Mammary epithelial cell (primary cell): ENCODE measurements at regions of chr15 and their contacts with region 1.

Region 1: DNA sequence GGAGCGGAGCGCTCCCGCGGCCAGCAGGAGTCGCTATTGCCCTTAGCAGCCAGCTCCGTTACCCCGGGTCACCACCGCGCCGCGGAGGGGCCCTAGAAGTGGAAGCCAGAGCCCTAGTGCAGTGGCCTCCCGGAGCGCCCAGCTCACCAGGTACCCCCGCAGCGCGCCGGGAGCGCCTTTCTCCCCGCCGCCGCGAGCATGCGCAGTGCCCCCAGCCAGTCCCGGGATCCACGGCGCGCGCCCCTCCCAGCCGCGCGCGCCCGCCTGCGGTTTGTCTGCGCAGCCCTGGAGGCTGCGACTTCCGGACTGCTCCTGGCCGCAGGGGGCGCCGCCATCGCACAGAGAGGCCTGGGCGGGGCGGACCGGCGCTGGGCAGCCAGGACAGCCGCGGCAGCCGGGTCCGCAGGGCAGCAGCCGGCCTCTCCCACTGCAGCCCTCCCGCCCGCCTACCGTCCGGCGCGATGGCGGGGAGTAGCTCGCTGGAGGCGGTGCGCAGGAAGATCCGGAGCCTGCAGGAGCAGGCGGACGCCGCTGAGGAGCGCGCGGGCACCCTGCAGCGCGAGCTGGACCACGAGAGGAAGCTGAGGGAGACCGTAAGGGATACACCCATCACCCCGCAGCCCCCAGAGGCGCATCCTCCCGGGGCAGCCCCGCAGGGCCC is 5.7 kb downstream of the TPM1 start:
- DNase-seq: peak; percentile 89
- H3K4me3 ChIP-seq: peak overlapping the region; percentile 58 to 65 (median 59)
- H3K27ac ChIP-seq: peak overlapping the region; percentile 69
- H3K4me1 ChIP-seq: peaks cover 58% of the 10 kb centered on the region
- H3K27me3 ChIP-seq: no peaks in the 10 kb centered on the region
- CTCF ChIP-seq: peak; percentile 66 to 97

Region 2: DNA sequence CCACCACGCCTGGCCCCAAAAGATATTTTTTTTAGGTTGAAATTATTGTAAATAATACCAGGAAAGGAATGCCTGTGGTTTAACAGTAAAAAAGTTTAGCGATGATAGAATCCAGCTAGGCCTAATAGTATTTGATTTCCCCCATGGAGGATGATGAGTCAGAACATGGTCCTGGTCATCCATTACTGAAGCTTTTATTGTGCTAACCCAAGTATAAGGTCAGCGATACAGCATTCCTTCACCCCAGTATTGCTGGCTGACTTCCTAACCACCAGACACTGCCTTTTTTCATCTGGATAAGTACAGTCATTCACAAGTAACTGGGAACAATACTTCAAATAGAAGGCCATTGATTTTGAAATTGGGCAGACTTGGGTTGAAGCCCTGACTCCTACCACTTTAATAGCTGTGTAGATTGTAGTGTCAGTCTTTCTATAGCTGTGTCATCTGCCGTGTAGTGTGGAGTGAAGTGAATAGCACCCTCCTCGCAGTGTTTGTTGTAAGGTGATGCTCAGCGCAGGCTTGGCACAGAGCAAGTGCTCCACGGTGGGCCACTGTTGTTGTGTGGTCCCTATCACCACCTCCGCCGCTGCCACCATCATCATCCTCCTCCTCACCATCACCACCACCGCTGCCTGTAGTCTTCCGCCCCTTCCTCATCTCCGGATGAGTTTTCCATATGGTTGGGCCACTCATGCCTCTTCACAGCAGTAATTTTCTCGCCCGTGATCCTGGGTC is 441.7 kb before region 1 on chr15:
- CTCF ChIA-PET with region 1: no interaction called
- dilution Hi-C with region 1: no loop called
- in situ Hi-C with region 1: no loop called
- intact Hi-C with region 1: loop called (anchors 10 kb)
- DNase-seq: peak; percentile 97
- H3K4me3 ChIP-seq: no peak overlapping the region
- H3K27ac ChIP-seq: peak overlapping the region; percentile 69
- H3K4me1 ChIP-seq: peaks cover 39% of the 10 kb centered on the region
- H3K27me3 ChIP-seq: no peaks in the 10 kb centered on the region
- CTCF ChIP-seq: no peak

Region 3: DNA sequence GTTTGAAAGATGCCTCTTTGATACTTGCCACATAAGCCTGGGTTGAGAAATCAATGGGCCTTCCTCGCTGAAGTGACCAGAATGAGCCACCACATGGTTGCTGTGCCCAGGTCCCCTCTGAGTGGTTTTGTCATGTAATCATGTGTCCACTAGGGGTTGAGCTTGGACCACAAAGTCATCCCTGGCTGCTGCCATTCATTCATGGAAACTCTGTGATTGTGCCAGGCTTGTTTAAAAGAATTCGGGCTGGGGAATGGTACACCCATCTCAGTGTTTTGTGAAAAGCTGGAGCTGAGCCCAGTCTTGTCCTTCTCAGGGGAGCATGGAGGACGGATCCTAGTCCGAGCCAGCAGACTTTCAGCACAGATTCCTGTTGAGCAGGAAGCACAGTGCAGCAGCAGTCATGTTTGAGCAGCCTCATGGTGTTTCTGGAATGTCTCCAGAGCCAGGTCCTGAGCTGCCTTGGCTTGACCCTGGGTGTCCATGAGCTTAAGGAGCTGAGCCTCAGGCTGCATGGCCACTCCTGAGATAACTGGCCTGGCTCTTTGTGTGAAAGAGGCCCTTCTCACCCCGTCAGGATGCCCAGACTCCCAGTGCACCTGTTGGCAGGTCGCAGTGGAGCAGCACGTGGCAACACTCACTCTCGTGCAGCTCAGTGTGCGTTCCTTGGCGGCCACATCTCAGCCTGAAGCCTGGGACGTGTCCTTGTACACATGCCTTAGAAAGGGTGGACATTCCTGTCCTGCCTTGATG is 266.0 kb before region 1 on chr15:
- CTCF ChIA-PET with region 1: no interaction called
- dilution Hi-C with region 1: no loop called
- in situ Hi-C with region 1: no loop called
- intact Hi-C with region 1: loop called (anchors 1 kb)
- DNase-seq: peak; percentile 64
- H3K4me3 ChIP-seq: no peak overlapping the region
- H3K27ac ChIP-seq: no peak overlapping the region
- H3K4me1 ChIP-seq: peaks cover 10% of the 10 kb centered on the region
- H3K27me3 ChIP-seq: no peaks in the 10 kb centered on the region
- CTCF ChIP-seq: peak; percentile 79 to 81

Region 4: GRCh38 chr15:63006032-63006878 is 42.0 kb before region 1 on chr15:
- CTCF ChIA-PET with region 1: interaction called, 7 read pairs
- dilution Hi-C with region 1: no loop called
- in situ Hi-C with region 1: no loop called
- intact Hi-C with region 1: loop called (anchors 1 kb)
- DNase-seq: peak; percentile 31
- H3K4me3 ChIP-seq: no peak overlapping the region
- H3K27ac ChIP-seq: no peak overlapping the region
- H3K4me1 ChIP-seq: peaks cover 14% of the 10 kb centered on the region
- H3K27me3 ChIP-seq: no peaks in the 10 kb centered on the region
- CTCF ChIP-seq: no peak

Region 5: GRCh38 chr15:63135804-63136203 is 87.6 kb after region 1 on chr15:
- CTCF ChIA-PET with region 1: interaction called, 13 read pairs
- dilution Hi-C with region 1: no loop called
- in situ Hi-C with region 1: no loop called
- intact Hi-C with region 1: no loop called
- DNase-seq: peak; percentile 89
- H3K4me3 ChIP-seq: no peak overlapping the region
- H3K27ac ChIP-seq: peak overlapping the region; percentile 97
- H3K4me1 ChIP-seq: peaks cover 20% of the 10 kb centered on the region
- H3K27me3 ChIP-seq: no peaks in the 10 kb centered on the region
- CTCF ChIP-seq: no peak

Region 6: GRCh38 chr15:63277038-63277892 is 229.0 kb after region 1 on chr15 and contains the start of gene APH1B:
- CTCF ChIA-PET with region 1: no interaction called
- dilution Hi-C with region 1: no loop called
- in situ Hi-C with region 1: no loop called
- intact Hi-C with region 1: loop called (anchors 2 kb)
- DNase-seq: peak; percentile 56
- H3K4me3 ChIP-seq: peak within 1 kb of the TSS; percentile 84 to 97 (median 85)
- H3K27ac ChIP-seq: peak within 1 kb of the TSS; percentile 66
- H3K4me1 ChIP-seq: peaks cover 13% of the 10 kb centered on the region
- H3K27me3 ChIP-seq: no peaks in the 10 kb centered on the region
- CTCF ChIP-seq: peak in 1 of 2 donors; percentile 10
- total RNA-seq, gene APH1B: 15.8 to 18.4 TPM